OCI-LY7 (cell line): ENCODE measurements at regions of chrX and their contacts with region 1.

Region 1: GRCh38 chrX:37755025-37755424 is 24.8 kb upstream of the CYBB start:
- DNase-seq: peak; percentile 86
- H3K4me3 ChIP-seq: peak overlapping the region; percentile 46
- H3K27ac ChIP-seq: peak overlapping the region; percentile 100
- H3K4me1 ChIP-seq: peaks cover 73% of the 10 kb centered on the region
- CTCF ChIP-seq: no peak

Region 2: GRCh38 chrX:37662181-37662580 is 92.8 kb before region 1 on chrX:
- CTCF ChIA-PET with region 1: no interaction called
- POLR2A ChIA-PET with region 1: no interaction called
- intact Hi-C with region 1: no loop called
- DNase-seq: no peak
- H3K4me3 ChIP-seq: no peak overlapping the region
- H3K27ac ChIP-seq: no peak overlapping the region
- H3K4me1 ChIP-seq: no peaks in the 10 kb centered on the region
- CTCF ChIP-seq: no peak

Region 3: DNA sequence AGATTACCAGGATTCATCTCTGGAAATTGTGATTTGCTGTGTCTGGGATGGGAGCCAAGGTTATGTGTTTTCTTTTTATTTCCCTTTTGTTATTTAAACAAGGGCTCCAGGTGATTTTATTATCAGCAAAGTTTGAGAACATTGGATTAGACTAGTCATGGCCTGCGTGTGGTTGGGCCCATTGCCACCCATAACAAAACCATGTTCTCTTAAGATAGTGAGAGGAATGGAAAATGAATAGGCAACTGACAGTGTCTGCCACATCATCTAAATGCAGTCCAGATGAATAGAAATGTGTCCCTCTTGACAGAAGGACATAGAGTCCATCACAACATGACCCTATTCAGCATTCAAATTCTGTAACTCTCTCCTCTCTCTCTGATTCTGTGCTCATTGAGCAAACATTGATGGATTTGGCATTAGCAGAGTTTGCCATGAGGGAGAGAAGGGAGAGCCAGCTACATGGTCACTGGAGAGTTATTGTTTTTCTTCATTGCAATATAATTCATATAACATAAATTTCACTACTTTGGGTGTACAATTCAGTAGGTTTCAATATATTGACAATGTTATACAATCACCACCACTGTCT is 57.8 kb before region 1 on chrX:
- CTCF ChIA-PET with region 1: no interaction called
- POLR2A ChIA-PET with region 1: no interaction called
- intact Hi-C with region 1: no loop called
- DNase-seq: no peak
- H3K4me3 ChIP-seq: no peak overlapping the region
- H3K27ac ChIP-seq: no peak overlapping the region
- H3K4me1 ChIP-seq: no peaks in the 10 kb centered on the region
- CTCF ChIP-seq: no peak

Region 4: GRCh38 chrX:37787423-37787869 is 32.4 kb after region 1 on chrX:
- CTCF ChIA-PET with region 1: interaction called, 6 read pairs
- POLR2A ChIA-PET with region 1: interaction called, 85 read pairs
- intact Hi-C with region 1: loop called (anchors 1 kb)
- DNase-seq: peak; percentile 66
- H3K4me3 ChIP-seq: peak overlapping the region; percentile 58
- H3K27ac ChIP-seq: peak overlapping the region; percentile 99
- H3K4me1 ChIP-seq: peaks cover 78% of the 10 kb centered on the region
- CTCF ChIP-seq: no peak

Region 5: GRCh38 chrX:37818031-37818430 is 63.0 kb after region 1 on chrX:
- CTCF ChIA-PET with region 1: no interaction called
- POLR2A ChIA-PET with region 1: interaction called, 27 read pairs
- intact Hi-C with region 1: loop called (anchors 1 kb)
- DNase-seq: peak; percentile 87
- H3K4me3 ChIP-seq: peak overlapping the region; percentile 65
- H3K27ac ChIP-seq: peak overlapping the region; percentile 100
- H3K4me1 ChIP-seq: peaks cover 96% of the 10 kb centered on the region
- CTCF ChIP-seq: no peak

Region 6: DNA sequence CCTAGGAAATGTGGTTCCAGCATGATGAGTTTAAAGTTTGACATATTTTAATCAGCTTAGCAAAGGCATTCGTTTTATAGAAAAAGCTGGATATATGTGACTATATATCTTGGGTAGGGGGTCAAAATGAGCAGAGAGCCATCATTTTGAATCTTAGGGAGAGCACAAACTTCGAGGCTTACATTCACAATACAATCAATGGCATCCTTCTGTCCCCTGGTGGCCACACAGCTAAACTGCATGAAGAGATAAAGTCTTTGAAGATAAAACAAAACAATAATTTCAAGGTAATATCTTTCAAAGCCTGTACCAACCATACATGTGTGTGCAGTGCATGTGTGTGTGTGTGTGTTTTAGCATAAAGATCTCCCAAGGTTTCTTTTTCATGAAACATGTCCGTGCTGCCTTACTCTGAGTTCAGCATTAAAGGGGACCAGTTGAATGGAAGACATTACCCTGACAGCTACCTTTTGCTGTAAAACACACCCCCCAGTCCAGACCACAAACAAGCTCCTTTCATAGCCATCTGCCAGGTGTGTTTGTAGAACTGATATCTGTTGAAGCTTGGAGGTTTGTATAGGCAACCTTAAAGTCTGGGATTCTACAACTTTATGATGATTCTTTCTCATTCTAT is 70.3 kb after region 1 on chrX:
- CTCF ChIA-PET with region 1: interaction called, 7 read pairs
- POLR2A ChIA-PET with region 1: interaction called, 27 read pairs
- intact Hi-C with region 1: no loop called
- DNase-seq: peak; percentile 73
- H3K4me3 ChIP-seq: no peak overlapping the region
- H3K27ac ChIP-seq: peak overlapping the region; percentile 60
- H3K4me1 ChIP-seq: peaks cover 53% of the 10 kb centered on the region
- CTCF ChIP-seq: peak; percentile 91